PC-9 (cell line): ENCODE measurements at regions of chr1 and their contacts with region 1.

Region 1: DNA sequence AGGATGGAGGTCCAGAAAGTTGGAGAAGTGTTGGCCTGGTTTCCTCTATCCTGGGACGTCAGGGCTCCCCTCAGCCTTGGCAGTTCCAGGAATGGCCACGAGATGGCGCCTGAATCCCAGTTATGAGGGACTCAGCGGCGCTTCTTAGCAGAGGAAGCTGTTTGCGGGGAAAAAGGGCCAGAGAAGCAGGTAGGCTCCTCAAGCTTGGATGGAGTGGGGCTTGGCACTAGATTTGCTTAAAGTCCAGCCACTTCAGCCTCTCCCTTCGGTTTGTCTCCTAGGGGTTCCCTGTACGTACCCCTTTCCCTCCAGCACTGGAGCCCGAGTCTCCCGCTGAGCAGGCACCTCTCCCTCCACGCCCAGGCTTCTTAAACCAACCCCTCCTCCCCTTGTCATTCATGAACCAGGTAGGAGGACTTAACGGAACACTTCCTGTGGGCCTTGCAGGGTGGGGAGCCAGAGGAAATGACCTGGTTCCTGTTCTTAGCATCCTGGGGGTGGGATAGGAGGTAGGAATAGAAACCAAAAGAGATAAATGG is 32.0 kb upstream of the TENT5B start:
- DNase-seq: peak; percentile 52 to 84
- H3K4me3 ChIP-seq: no peak overlapping the region
- H3K27ac ChIP-seq: no peak overlapping the region
- H3K4me1 ChIP-seq: no peaks in the 10 kb centered on the region
- H3K27me3 ChIP-seq: no peaks in the 10 kb centered on the region
- CTCF ChIP-seq: peak; percentile 89

Region 2: GRCh38 chr1:26993237-26994019 is 51.3 kb before region 1 on chr1 and contains the start of gene TRNP1:
- CTCF ChIA-PET with region 1: interaction called, 23 read pairs
- POLR2A ChIA-PET with region 1: no interaction called
- intact Hi-C with region 1: loop called (anchors 1 kb)
- DNase-seq: peak; percentile 45 to 76
- H3K4me3 ChIP-seq: peak within 1 kb of the TSS; percentile 62
- H3K27ac ChIP-seq: no peak within 1 kb of the TSS
- H3K4me1 ChIP-seq: peaks cover 49% of the 10 kb centered on the region
- H3K27me3 ChIP-seq: no peaks in the 10 kb centered on the region
- CTCF ChIP-seq: no peak
- total RNA-seq, gene TRNP1: 7.4 and 7.9 TPM in 2 replicates

Region 3: GRCh38 chr1:27031235-27032118 is 13.2 kb before region 1 on chr1:
- CTCF ChIA-PET with region 1: interaction called, 14 read pairs
- POLR2A ChIA-PET with region 1: no interaction called
- intact Hi-C with region 1: no loop called
- DNase-seq: peak; percentile 76 to 93
- H3K4me3 ChIP-seq: peak overlapping the region; percentile 59; the same call in 1 of the 2 replicates
- H3K27ac ChIP-seq: peak overlapping the region; percentile 81
- H3K4me1 ChIP-seq: peaks cover 5% of the 10 kb centered on the region; the same call in 1 of the 2 replicates
- H3K27me3 ChIP-seq: no peaks in the 10 kb centered on the region
- CTCF ChIP-seq: no peak

Region 4: DNA sequence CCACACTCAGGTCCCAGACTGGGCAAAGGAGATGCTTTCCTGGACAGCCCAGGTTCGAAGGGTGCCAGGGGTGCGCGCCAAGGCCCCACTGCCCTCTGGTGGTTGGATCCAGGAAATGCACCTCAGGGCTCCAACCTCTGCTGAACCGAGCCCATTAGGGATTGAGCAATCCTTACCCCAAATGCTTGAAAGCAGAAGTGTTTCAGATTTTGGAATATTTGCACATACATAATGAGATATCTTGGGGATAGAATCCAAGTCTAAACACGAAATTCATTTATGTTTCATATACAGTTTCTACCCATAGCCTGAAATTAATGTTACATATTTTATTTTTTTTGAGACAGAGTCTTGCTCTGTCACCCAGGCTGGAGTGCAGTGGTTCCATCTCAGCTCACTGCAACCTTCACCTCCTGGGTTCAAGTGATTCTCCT is 52.8 kb after region 1 on chr1:
- CTCF ChIA-PET with region 1: interaction called, 14 read pairs
- POLR2A ChIA-PET with region 1: no interaction called
- intact Hi-C with region 1: loop called (anchors 1 kb)
- DNase-seq: peak; percentile 49 to 77
- H3K4me3 ChIP-seq: no peak overlapping the region
- H3K27ac ChIP-seq: no peak overlapping the region
- H3K4me1 ChIP-seq: 0 out of 2 replicates have a peak, but pooled peaks cover 12% of the 10 kb centered on the region
- H3K27me3 ChIP-seq: no peaks in the 10 kb centered on the region
- CTCF ChIP-seq: peak; percentile 90

Region 5: DNA sequence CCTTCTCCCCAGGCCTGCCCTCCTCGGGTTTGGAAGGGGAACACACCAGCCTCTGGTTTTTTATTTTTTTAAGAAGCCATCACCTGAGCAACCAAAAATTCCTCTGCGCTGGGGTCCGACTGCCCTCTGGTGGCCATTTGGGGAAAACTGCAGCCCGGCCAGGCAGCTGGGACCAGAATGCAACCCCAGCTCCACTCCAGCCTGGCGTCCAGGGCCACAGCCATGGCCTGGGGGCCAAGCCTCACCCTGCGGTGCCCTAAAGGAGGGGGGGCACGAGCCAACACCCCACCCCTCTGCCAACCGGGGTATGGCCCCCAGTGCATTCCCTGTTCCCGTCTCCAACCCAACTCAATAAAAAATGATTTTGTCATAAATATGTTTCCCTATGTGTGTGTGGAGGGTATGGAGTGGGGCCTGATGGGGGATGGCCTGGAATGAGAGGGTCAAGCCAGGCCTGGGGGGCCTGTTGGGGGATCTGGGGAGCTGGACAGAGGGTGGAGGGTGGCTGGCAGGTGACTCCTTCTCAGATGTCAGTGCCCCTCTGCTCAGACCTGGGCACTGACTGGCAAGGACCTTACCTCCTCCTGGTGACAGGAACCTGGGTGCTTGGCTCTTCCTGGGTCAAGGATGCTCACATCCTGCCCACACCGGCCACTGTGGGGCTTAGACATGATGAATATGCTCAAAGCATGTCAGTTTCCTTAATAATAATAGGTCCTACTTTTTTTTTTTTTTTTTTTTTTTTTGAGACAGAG is 350.9 kb after region 1 on chr1:
- CTCF ChIA-PET with region 1: interaction called, 13 read pairs
- POLR2A ChIA-PET with region 1: no interaction called
- intact Hi-C with region 1: loop called (anchors 5 kb)
- DNase-seq: peak; percentile 38 to 83
- H3K4me3 ChIP-seq: no peak overlapping the region
- H3K27ac ChIP-seq: no peak overlapping the region
- H3K4me1 ChIP-seq: no peaks in the 10 kb centered on the region
- H3K27me3 ChIP-seq: no peaks in the 10 kb centered on the region
- CTCF ChIP-seq: peak; percentile 82

Region 6: DNA sequence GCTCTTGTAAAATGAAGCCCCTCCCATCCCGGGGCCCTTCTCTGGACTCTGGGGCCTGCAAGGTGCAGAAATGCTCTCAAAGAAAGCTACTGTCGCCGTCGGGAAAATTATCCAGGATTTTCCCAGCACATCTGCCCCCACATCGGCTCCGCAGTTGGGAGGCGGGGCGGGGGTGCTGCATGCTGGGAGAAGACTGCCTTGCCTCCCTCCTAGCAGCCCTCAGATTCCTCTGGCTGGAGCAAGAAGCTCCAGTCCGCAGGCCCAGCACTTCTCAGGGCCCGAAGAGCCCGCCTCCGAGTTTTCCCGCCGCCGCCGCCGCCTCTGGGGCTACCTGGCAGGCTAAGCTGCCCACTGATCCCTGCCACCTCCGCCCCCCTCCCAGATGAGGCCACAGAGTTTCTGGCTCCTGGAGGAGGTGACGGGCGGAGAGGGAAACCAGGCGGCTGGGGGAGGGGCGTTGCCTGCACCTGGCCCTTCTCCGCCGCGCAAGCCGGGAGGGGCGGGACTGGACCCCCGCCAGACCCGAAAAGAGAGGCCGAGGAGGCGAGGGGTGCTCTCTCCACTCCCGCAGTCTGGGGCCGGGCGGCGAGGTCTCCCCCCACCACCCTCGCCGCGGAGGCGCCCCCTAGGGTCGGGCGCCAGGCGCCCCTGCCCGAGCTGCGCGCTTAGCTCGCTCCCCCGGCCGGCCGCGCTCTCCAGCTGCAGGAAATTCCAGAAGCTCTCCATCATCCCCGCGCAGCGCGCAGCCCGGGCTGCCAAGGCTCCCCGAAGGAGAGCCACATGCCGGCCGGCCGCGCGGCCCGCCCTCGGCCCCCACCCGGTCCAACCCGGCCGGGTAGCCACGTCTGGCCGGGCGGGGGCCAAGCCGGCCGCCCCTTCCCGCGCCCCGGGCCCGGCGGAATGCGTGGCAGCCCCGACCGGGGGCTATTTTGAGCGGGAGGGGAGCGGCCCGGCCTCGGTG is 530.5 kb after region 1 on chr1:
- CTCF ChIA-PET with region 1: no interaction called
- POLR2A ChIA-PET with region 1: no interaction called
- intact Hi-C with region 1: no loop called
- DNase-seq: no peak
- H3K4me3 ChIP-seq: no peak overlapping the region
- H3K27ac ChIP-seq: no peak overlapping the region
- H3K4me1 ChIP-seq: no peaks in the 10 kb centered on the region
- H3K27me3 ChIP-seq: no peaks in the 10 kb centered on the region
- CTCF ChIP-seq: no peak

Region 7: GRCh38 chr1:27618341-27619082 is 573.8 kb after region 1 on chr1:
- CTCF ChIA-PET with region 1: interaction called, 10 read pairs
- POLR2A ChIA-PET with region 1: no interaction called
- intact Hi-C with region 1: no loop called
- DNase-seq: no peak
- H3K4me3 ChIP-seq: no peak overlapping the region
- H3K27ac ChIP-seq: no peak overlapping the region
- H3K4me1 ChIP-seq: no peaks in the 10 kb centered on the region
- H3K27me3 ChIP-seq: no peaks in the 10 kb centered on the region
- CTCF ChIP-seq: no peak